Activated CD8-positive, alpha-beta T cell treated with anti-CD3 and anti-CD28 coated beads, Interleukin-2, amount 10 ng/mL, durations not matched to agents 7 days and 5 days (primary cell): ENCODE measurements at regions of chr1 and their contacts with region 1.

Region 1: DNA sequence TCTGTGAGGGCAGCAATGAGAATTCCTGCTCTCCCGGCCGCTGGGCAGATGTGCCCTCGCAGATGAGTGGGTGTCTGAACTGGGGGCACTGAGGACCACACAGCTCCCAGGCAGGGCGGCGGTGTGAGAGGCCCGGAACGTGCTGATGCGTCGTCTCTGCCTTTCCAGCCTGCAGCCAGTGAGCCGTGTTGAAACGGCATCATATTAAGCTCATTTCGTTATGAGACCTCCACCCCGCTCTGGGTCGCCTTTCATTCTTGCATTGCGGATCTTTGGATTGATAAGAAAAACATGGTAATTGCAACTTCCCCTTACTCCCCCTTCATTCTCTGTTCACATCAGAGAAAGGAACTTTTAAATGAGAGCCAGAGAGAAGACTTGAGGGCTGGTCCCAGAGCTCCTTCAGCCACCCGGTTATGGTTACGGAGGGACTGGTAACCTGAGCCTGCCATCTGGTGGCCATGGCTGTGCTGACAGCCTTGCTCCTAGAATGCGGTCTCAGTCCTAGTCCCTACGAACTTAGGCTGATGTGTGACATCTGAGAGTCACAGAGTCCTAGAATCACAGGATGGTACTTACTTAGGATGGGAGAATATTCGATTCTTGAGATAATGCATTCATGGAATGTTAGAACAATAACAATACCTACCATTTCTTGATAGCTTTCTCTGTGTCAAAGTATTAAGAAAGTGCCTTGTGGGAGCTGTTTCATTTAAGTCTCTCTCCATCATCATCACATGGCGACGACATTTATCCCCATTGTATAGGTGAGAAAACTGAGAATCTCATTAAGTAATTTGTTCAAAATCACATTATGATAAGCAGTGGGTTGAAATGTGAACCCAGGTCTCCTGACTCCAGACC is 271.0 kb downstream of the TRABD2B start:
- DNase-seq: peak; percentile 75
- ATAC-seq: peak; percentile 89
- H3K4me3 Mint-ChIP-seq: no peak overlapping the region
- H3K27ac Mint-ChIP-seq: no peak overlapping the region
- H3K4me1 Mint-ChIP-seq: peaks cover 6% of the 10 kb centered on the region
- H3K27me3 Mint-ChIP-seq: peaks cover 35% of the 10 kb centered on the region

Region 2: GRCh38 chr1:47388891-47389238 is 337.4 kb before region 1 on chr1:
- CTCF ChIA-PET with region 1: interaction called, 30 read pairs
- POLR2A ChIA-PET with region 1: no interaction called
- DNase-seq: peak; percentile 62
- ATAC-seq: peak; percentile 67
- H3K4me3 Mint-ChIP-seq: no peak overlapping the region
- H3K27ac Mint-ChIP-seq: no peak overlapping the region
- H3K4me1 Mint-ChIP-seq: no peaks in the 10 kb centered on the region
- H3K27me3 Mint-ChIP-seq: peaks cover 14% of the 10 kb centered on the region

Region 3: GRCh38 chr1:47432071-47433036 is 293.9 kb before region 1 on chr1:
- CTCF ChIA-PET with region 1: interaction called, 43 read pairs
- POLR2A ChIA-PET with region 1: no interaction called
- DNase-seq: peak; percentile 68
- ATAC-seq: peak; percentile 6
- H3K4me3 Mint-ChIP-seq: peak overlapping the region; percentile 4
- H3K27ac Mint-ChIP-seq: no peak overlapping the region
- H3K4me1 Mint-ChIP-seq: peaks cover 49% of the 10 kb centered on the region
- H3K27me3 Mint-ChIP-seq: peaks cover 23% of the 10 kb centered on the region

Region 4: GRCh38 chr1:47527658-47528255 is 198.5 kb before region 1 on chr1:
- CTCF ChIA-PET with region 1: interaction called, 16 read pairs
- POLR2A ChIA-PET with region 1: no interaction called
- DNase-seq: peak; percentile 33
- ATAC-seq: no peak
- H3K4me3 Mint-ChIP-seq: no peak overlapping the region
- H3K27ac Mint-ChIP-seq: no peak overlapping the region
- H3K4me1 Mint-ChIP-seq: no peaks in the 10 kb centered on the region
- H3K27me3 Mint-ChIP-seq: peaks cover 43% of the 10 kb centered on the region

Region 5: GRCh38 chr1:47703981-47704596 is 22.1 kb before region 1 on chr1:
- CTCF ChIA-PET with region 1: interaction called, 11 read pairs
- POLR2A ChIA-PET with region 1: no interaction called
- DNase-seq: no peak
- ATAC-seq: no peak
- H3K4me3 Mint-ChIP-seq: no peak overlapping the region
- H3K27ac Mint-ChIP-seq: no peak overlapping the region
- H3K4me1 Mint-ChIP-seq: peaks cover 1% of the 10 kb centered on the region
- H3K27me3 Mint-ChIP-seq: peaks cover 26% of the 10 kb centered on the region

Region 6: GRCh38 chr1:47738560-47739182 is 12.4 kb after region 1 on chr1:
- CTCF ChIA-PET with region 1: interaction called, 18 read pairs
- POLR2A ChIA-PET with region 1: no interaction called
- DNase-seq: no peak
- ATAC-seq: no peak
- H3K4me3 Mint-ChIP-seq: no peak overlapping the region
- H3K27ac Mint-ChIP-seq: no peak overlapping the region
- H3K4me1 Mint-ChIP-seq: no peaks in the 10 kb centered on the region
- H3K27me3 Mint-ChIP-seq: peaks cover 32% of the 10 kb centered on the region

Region 7: GRCh38 chr1:47881505-47882442 is 155.6 kb after region 1 on chr1:
- CTCF ChIA-PET with region 1: no interaction called
- POLR2A ChIA-PET with region 1: no interaction called
- DNase-seq: no peak
- ATAC-seq: no peak
- H3K4me3 Mint-ChIP-seq: no peak overlapping the region
- H3K27ac Mint-ChIP-seq: no peak overlapping the region
- H3K4me1 Mint-ChIP-seq: no peaks in the 10 kb centered on the region
- H3K27me3 Mint-ChIP-seq: peaks cover 3% of the 10 kb centered on the region